ENCODE measurements at regions of chr1 and their contacts with region 1.

Region 1: DNA sequence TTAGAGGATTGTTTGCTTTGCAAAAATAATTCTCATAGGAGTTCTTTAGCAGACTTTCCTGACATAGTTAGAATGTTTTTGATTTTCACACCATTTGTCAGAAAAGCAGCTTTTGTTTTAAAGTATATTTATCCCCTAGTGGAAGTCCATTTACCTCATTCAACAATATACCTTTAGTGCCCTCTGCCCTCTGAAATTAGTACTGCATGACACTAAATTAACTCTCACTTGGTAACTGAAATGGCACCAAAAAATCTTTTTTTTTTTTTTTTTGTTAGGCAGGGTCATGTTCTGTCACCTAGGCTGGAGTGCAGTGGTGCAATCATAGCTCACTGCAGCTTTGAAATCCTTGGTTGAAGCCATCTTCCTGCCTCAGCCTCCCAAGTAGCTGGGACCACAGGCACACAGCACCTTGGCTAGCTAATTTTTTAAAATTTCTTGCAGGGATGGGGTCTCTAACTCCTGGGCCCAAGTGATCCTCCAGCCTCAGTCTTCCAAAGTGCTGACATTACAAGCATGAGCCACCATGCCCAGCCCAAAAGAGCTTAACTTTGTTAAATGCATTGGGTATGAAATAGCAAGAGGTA is 13.6 kb downstream of the LRRC42 start:
- DNase-seq: no peak
- ATAC-seq: peak; percentile 43

Region 2: GRCh38 chr1:53526451-53527101 is 433.2 kb before region 1 on chr1:
- intact Hi-C with region 1: no loop called
- DNase-seq: peak in 1 of 2 donors; percentile 25
- ATAC-seq: no peak

Region 3: DNA sequence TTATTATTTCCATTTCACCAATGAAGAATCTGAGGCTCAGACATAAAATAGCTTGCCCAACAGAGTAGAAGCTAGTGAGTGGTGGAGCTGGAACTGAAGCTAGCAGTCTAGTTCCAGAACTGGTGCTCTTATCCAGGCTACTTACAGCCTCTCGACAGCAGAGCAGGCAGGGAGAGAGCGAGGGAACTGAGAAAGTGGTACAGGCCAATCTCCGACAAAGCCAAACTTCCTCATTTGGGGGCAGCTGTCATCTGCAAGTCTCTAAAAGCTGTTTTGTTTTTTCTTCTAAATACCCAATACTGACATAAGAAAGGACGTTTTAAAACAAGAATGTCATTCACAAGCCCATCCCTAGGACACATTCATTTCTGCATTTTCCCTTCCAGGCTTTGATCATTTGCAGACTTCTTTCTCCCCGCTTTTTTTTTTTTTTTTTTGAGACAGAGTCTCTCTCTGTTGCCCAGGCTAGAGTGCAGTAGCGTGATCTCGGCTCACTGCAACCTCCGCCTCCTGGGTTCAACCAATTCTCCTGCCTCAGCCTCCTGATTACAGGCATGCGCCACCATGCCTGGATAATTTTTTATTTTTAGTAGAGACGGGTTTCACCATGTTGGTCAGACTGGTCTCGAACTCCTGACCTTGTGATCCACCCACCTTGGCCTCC is 90.2 kb before region 1 on chr1:
- intact Hi-C with region 1: loop called in 1 of 2 experiments (anchors 5 kb)
- DNase-seq: no peak
- ATAC-seq: no peak

Region 4: DNA sequence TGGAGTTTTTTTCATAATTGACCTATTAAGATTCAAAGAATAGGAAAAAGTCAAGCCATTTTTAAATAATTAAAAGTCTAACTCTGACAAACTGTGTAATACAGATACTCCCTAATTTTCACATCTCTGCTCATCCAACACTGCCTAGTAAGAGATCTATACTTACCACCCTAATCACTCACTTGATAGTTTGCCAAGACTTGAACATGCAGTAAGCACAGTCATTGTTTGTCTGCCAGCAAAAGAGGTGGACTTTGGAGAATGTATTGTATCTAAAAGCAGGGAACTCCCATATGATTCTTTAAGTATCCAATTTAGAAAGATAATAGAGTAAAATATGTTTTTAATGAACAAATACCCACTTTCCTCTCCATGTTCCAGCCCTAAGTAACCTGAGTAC is 77.7 kb after region 1 on chr1:
- intact Hi-C with region 1: loop called in 1 of 2 experiments (anchors 10 kb)
- DNase-seq: no peak
- ATAC-seq: no peak

Region 5: DNA sequence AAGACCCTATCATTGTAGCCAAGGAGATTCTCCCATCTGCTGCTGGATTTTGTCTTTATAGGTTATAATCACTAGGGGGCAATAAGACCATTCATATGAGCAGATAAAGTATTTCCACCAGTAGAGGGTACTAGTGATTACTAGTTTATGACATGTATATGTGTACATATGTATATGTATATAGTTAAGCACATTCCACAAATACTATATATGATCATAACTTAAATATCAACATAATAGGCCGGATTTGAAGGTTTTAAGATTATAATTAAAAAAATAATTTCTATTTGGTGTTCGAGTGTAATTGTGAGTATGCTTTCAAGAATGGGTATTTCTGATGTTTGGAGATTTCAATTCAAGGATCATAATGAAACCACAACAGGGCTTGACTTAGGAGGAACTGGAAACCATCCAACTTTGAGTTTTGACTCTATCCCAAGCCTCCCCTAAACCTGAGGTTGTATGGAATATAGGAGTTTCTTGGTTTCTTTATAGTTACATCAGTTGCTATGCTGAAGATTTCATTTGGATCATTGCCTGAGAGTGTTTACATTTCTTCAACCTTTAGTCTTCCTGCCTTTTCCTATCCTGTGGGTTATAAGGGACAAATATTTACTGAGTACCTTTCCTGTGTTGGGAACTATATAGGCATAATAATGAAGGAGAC is 110.5 kb after region 1 on chr1:
- intact Hi-C with region 1: no loop called
- DNase-seq: no peak
- ATAC-seq: peak; percentile 90

Measured in left colon (tissue), 2 donors.